Panc1 (cell line): ENCODE measurements at regions of chr11 and their contacts with region 1.

Region 1: GRCh38 chr11:100930185-100930778 is 199.3 kb downstream of the PGR start:
- DNase-seq: no peak
- ATAC-seq: peak; percentile 66; the same call in 1 of the 2 replicates
- H3K4me3 ChIP-seq: no peak overlapping the region
- H3K27ac ChIP-seq: no peak overlapping the region
- H3K4me1 ChIP-seq: peaks cover 14% of the 10 kb centered on the region
- H3K27me3 ChIP-seq: no peaks in the 10 kb centered on the region
- CTCF ChIP-seq: peak; percentile 73; the same call in 1 of the 2 replicates

Region 2: DNA sequence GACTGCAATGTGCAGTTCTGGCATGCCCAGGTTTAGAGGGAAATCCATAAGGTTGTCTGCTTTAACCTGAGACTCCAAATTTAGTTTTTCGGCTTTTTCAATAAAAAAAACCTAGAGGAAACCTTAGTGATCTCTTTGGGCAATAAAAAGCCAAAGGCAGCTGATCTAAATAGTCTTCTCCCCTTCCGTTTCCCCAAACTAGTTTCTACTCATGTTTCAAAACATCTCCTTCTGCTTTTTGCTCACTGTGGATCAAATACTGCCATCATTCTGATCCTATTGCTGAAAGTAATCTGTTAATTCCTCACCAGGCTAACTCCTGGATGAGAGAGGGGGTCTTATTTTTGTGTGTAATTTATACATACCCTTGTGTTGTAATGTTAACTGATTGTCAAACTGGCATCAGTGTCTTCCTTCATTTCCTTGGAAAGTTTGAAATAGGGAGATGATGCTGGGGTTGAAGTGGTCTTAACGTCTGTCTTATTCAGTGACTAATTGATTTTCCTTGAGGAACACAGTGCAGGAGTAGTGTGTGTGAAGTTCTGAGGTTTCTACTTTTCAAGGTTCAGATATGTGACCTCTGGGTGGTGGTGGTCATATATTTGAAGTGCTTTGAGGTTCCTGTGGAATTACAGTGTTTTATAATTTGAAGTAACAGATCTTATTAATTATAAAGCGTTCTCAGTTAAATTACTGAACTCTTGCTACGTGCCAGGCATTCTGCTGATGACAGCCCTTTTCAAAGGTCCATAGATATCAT is 188.2 kb before region 1 on chr11:
- CTCF ChIA-PET with region 1: no interaction called
- POLR2A ChIA-PET with region 1: no interaction called
- in situ Hi-C with region 1: no loop called
- intact Hi-C with region 1: no loop called
- DNase-seq: no peak
- ATAC-seq: no peak
- H3K4me3 ChIP-seq: no peak overlapping the region
- H3K27ac ChIP-seq: no peak overlapping the region
- H3K4me1 ChIP-seq: peaks cover 26% of the 10 kb centered on the region
- H3K27me3 ChIP-seq: no peaks in the 10 kb centered on the region
- CTCF ChIP-seq: no peak

Region 3: DNA sequence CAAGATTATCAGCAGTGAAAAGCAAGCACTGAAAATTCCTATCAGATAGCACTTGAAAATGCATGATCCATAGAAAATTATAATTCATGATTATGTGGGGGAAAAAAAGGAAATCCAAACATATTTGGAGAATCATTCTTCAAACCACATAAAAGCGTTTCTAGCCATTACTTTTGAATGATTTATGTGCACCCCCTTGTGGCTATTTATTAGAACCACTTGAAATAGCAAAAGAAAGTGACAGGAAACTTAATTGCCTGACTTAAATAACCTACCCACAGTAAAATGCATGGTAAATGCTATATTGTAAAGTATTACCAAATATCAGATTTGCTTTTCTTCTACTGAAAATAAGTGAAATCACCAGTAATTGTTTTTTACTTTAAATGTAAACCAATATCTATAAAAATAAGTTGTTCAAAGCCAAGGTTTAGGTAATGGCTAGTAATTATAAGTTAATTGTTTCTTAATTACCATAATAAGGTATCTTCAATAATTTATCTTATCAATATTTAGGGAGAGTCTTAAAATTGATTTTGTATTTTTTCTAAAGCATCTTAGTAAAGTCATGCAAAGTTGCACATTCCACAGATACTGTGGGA is 74.7 kb before region 1 on chr11:
- CTCF ChIA-PET with region 1: no interaction called
- POLR2A ChIA-PET with region 1: no interaction called
- in situ Hi-C with region 1: no loop called
- intact Hi-C with region 1: loop called (anchors 2 kb)
- DNase-seq: no peak
- ATAC-seq: no peak
- H3K4me3 ChIP-seq: no peak overlapping the region
- H3K27ac ChIP-seq: no peak overlapping the region
- H3K4me1 ChIP-seq: no peaks in the 10 kb centered on the region; the same call in none of the 2 replicates
- H3K27me3 ChIP-seq: no peaks in the 10 kb centered on the region
- CTCF ChIP-seq: peak; percentile 69; the same call in 1 of the 2 replicates

Region 4: DNA sequence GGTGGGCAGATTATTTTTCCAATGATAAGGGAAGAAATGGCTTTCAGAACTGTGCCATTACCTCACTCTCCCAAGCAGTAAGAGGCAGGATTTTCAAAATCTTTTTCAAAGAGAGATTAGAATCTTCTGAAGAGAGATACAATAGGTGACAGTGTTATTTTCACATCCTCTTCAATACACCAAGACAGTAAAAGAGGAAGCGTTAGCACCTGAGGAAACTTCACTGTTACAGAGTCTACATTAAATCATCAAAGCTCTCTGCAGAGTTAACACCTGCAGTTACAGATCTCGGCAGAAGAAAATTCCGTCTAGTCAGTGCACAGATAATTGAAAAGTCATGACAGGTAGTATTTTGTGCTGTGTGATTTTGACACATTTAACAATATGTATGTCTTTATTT is 54.4 kb after region 1 on chr11:
- CTCF ChIA-PET with region 1: no interaction called
- POLR2A ChIA-PET with region 1: no interaction called
- in situ Hi-C with region 1: no loop called
- intact Hi-C with region 1: no loop called
- DNase-seq: no peak
- ATAC-seq: no peak
- H3K4me3 ChIP-seq: no peak overlapping the region
- H3K27ac ChIP-seq: no peak overlapping the region
- H3K4me1 ChIP-seq: no peaks in the 10 kb centered on the region
- H3K27me3 ChIP-seq: no peaks in the 10 kb centered on the region
- CTCF ChIP-seq: no peak